ENCODE measurements at regions of chr22 and their contacts with region 1.

Region 1: GRCh38 chr22:33920927-33921524 is 750 bp upstream of the LARGE1 start:
- DNase-seq: peak; percentile 98 to 99
- ATAC-seq: peak; percentile 86

Region 2: GRCh38 chr22:33529424-33530113 is 391.5 kb before region 1 on chr22:
- intact Hi-C with region 1: loop called in 1 of 2 experiments (anchors 10 kb)
- DNase-seq: no peak
- ATAC-seq: no peak

Region 3: DNA sequence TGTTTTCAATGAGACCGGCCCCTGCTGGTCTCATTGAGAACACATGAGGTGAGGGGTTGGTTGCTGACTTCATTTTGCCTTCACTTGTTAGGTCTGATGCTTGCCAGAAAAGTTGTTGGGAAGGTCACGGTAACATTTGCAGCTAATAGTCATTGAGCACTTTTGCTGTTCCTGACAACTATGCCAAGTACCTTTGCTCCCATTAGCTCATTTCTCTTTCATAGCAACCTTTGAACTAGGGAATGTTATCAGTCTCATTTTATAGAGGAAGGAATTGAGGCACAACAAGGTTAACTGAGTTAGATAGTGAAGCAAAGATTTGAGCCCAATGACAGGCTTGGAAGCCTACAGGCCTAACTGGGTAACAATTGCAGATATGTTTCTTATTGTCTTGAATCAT is 194.7 kb after region 1 on chr22:
- intact Hi-C with region 1: loop called in 1 of 2 experiments (anchors 5 kb)
- DNase-seq: no peak
- ATAC-seq: peak; percentile 87